ENCODE measurements at regions of chr5 and their contacts with region 1.

Region 1: GRCh38 chr5:123164054-123164453 is 75.0 kb downstream of the PRDM6 start:
- DNase-seq: no peak
- ATAC-seq: no peak
- H3K4me3 Mint-ChIP-seq: no peak overlapping the region
- H3K27ac Mint-ChIP-seq: no peak overlapping the region
- H3K4me1 Mint-ChIP-seq: peaks cover 15% of the 10 kb centered on the region
- H3K27me3 Mint-ChIP-seq: peaks cover 18% of the 10 kb centered on the region
- CTCF ChIP-seq: no peak

Region 2: GRCh38 chr5:123088031-123088805 is 75.8 kb before region 1 on chr5:
- CTCF ChIA-PET with region 1: no interaction called
- POLR2A ChIA-PET with region 1: no interaction called
- DNase-seq: peak; percentile 28
- ATAC-seq: peak; percentile 11
- H3K4me3 Mint-ChIP-seq: peak overlapping the region; percentile 86
- H3K27ac Mint-ChIP-seq: no peak overlapping the region
- H3K4me1 Mint-ChIP-seq: peaks cover 54% of the 10 kb centered on the region
- H3K27me3 Mint-ChIP-seq: peaks cover 98% of the 10 kb centered on the region
- CTCF ChIP-seq: no peak

Region 3: DNA sequence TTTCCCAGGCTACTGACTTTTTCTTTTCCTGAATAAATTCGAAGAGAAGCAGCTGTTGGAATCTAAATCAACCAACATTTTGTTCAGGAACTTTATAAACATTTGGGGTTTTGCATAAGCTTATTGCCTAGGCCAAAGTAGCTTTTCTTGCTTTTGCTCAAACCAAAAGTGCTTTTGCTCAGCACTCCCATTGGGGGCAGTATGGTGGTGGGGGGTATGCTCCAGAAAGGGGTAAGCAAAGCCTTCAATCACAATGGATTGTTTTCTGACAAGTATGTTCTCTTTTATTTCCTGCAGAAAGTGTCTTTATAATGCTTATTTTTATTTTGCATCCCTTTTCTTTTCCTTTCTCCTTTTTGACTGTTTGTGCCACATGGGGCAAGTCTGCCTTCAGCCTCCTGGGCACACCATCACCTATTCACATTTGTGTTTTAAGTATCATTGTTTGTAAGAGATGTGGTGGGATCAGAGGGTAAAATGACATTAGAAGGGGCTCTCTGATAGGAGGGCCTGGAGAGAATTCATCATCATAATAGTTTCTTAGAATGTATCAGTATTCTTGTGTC is 10.9 kb after region 1 on chr5:
- CTCF ChIA-PET with region 1: interaction called, 10 read pairs
- POLR2A ChIA-PET with region 1: no interaction called
- DNase-seq: peak; percentile 28
- ATAC-seq: peak; percentile 84
- H3K4me3 Mint-ChIP-seq: 0 out of 2 replicates have a peak overlapping the region, but pooled peaks have one; percentile 7
- H3K27ac Mint-ChIP-seq: no peak overlapping the region
- H3K4me1 Mint-ChIP-seq: peaks cover 37% of the 10 kb centered on the region
- H3K27me3 Mint-ChIP-seq: no peaks in the 10 kb centered on the region; the same call in 1 of the 2 replicates
- CTCF ChIP-seq: no peak

Region 4: GRCh38 chr5:123582550-123583285 is 418.7 kb after region 1 on chr5:
- CTCF ChIA-PET with region 1: no interaction called
- POLR2A ChIA-PET with region 1: no interaction called
- DNase-seq: no peak
- ATAC-seq: peak; percentile 91
- H3K4me3 Mint-ChIP-seq: peak overlapping the region; percentile 39
- H3K27ac Mint-ChIP-seq: no peak overlapping the region
- H3K4me1 Mint-ChIP-seq: peaks cover 36% of the 10 kb centered on the region
- H3K27me3 Mint-ChIP-seq: no peaks in the 10 kb centered on the region
- CTCF ChIP-seq: no peak

Measured in WTC11 (cell line).